ENCODE measurements at regions of chr7 and their contacts with region 1.

Region 1: GRCh38 chr7:75866489-75867389 is 12.1 kb upstream of the RHBDD2 start:
- DNase-seq: peak; percentile 66
- ATAC-seq: peak; percentile 87
- H3K4me3 ChIP-seq: no peak overlapping the region
- H3K27ac ChIP-seq: no peak overlapping the region
- H3K4me1 ChIP-seq: no peaks in the 10 kb centered on the region
- H3K27me3 ChIP-seq: no peaks in the 10 kb centered on the region
- CTCF ChIP-seq: peak; percentile 87

Region 2: DNA sequence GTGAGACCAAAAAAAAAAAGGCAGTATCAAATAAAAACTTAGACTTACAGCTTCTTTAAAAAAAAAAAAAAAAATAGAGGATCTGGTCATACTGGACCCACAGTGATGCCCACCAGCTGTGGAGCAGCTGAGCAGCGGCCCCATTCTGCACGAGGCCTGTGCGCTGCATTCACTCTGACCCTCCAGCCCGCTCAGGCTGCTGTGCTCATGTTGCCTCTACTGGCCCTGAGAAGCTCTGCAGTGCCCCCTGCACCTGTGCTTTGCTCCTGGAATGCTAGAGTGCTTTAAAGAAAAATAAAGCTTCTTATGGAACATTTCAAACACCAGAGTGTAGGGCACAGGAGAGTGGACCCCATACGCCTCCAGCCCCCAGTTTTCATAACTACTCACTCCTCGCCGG is 94.5 kb after region 1 on chr7:
- CTCF ChIA-PET with region 1: interaction called, 10 read pairs
- POLR2A ChIA-PET with region 1: no interaction called
- intact Hi-C with region 1: no loop called
- DNase-seq: no peak
- ATAC-seq: peak; percentile 46; the same call in 1 of the 2 replicates
- H3K4me3 ChIP-seq: no peak overlapping the region
- H3K27ac ChIP-seq: no peak overlapping the region
- H3K4me1 ChIP-seq: peaks cover 9% of the 10 kb centered on the region
- H3K27me3 ChIP-seq: no peaks in the 10 kb centered on the region
- CTCF ChIP-seq: peak; percentile 39; the same call in 1 of the 2 replicates

Region 3: DNA sequence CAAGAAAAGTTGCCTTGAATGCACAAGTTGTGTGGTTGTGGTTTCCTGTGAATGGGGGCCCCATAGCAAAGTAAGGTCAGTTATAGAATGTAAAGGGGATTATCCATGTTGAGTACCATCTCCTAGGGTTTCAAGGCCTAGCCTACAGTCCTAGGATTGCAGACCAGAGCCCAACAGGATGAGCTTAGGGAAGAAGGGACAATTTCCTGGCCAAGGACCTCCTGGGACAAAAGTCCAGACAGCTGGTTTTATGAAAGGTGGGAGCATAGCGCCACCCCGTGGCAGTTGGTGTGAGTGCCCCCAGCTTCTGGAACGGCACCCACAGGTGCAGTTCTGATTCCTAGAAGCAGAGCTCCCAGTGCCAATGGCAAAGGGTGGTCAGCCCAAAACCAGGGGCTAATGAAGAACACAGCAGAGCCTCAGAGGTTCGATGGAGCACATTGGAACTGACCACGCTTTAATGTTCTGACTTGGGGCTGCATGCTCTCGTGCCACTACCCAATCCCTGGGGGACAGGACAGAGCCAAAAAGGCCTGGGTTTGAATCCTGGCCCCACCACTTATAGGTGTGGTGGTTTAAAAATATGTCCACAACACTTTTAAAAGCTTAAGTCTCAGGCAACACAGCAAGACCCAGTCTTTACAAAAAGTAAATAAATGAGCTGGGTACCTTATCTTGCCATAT is 153.4 kb after region 1 on chr7:
- CTCF ChIA-PET with region 1: interaction called, 4 read pairs
- POLR2A ChIA-PET with region 1: no interaction called
- intact Hi-C with region 1: loop called (anchors 1 kb)
- DNase-seq: peak; percentile 71
- ATAC-seq: peak; percentile 74
- H3K4me3 ChIP-seq: no peak overlapping the region
- H3K27ac ChIP-seq: no peak overlapping the region
- H3K4me1 ChIP-seq: no peaks in the 10 kb centered on the region
- H3K27me3 ChIP-seq: no peaks in the 10 kb centered on the region
- CTCF ChIP-seq: peak; percentile 92

Measured in PC-3 (cell line).